PC-3 (cell line): ENCODE measurements at regions of chr6 and their contacts with region 1.

Region 1: GRCh38 chr6:116287689-116288282 is 8.1 kb upstream of the TSPYL1 start:
- DNase-seq: peak; percentile 64
- ATAC-seq: peak; percentile 65
- H3K4me3 ChIP-seq: no peak overlapping the region
- H3K27ac ChIP-seq: no peak overlapping the region
- H3K4me1 ChIP-seq: no peaks in the 10 kb centered on the region
- H3K27me3 ChIP-seq: no peaks in the 10 kb centered on the region
- CTCF ChIP-seq: peak; percentile 75

Region 2: GRCh38 chr6:116402108-116402937 is 114.5 kb after region 1 on chr6:
- CTCF ChIA-PET with region 1: no interaction called
- POLR2A ChIA-PET with region 1: no interaction called
- intact Hi-C with region 1: loop called (anchors 2 kb)
- DNase-seq: no peak
- ATAC-seq: no peak
- H3K4me3 ChIP-seq: no peak overlapping the region
- H3K27ac ChIP-seq: no peak overlapping the region
- H3K4me1 ChIP-seq: peaks cover 37% of the 10 kb centered on the region
- H3K27me3 ChIP-seq: no peaks in the 10 kb centered on the region
- CTCF ChIP-seq: no peak

Region 3: DNA sequence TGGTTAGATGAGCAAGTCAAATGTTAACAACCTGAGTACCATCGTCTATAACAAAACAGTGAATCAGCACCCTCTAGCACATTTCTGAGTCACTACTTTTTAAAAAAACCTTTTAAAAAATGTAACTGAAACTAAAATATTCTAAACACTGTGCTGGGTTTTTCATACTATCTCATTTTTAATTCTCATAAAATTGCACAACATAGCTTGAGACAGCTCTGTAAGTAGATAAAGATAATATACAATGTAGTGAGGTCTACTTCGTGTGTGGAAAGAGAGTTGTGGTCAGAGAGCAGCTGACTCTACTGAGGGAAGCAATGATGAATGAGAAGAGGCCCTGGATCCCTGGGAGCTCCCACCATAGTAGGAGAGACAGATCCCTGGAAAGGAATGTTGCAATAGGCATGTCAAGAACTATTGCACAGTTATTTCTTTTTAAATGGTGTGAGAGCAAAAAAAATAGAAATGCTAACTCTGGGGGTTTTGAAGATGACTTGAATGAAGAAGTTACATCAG is 159.8 kb after region 1 on chr6:
- CTCF ChIA-PET with region 1: interaction called, 3 read pairs
- POLR2A ChIA-PET with region 1: no interaction called
- intact Hi-C with region 1: loop called (anchors 5 kb)
- DNase-seq: peak; percentile 67
- ATAC-seq: peak; percentile 69
- H3K4me3 ChIP-seq: peak overlapping the region; percentile 51; the same call in 1 of the 2 replicates
- H3K27ac ChIP-seq: peak overlapping the region; percentile 80
- H3K4me1 ChIP-seq: peaks cover 27% of the 10 kb centered on the region
- H3K27me3 ChIP-seq: no peaks in the 10 kb centered on the region
- CTCF ChIP-seq: no peak

Region 4: DNA sequence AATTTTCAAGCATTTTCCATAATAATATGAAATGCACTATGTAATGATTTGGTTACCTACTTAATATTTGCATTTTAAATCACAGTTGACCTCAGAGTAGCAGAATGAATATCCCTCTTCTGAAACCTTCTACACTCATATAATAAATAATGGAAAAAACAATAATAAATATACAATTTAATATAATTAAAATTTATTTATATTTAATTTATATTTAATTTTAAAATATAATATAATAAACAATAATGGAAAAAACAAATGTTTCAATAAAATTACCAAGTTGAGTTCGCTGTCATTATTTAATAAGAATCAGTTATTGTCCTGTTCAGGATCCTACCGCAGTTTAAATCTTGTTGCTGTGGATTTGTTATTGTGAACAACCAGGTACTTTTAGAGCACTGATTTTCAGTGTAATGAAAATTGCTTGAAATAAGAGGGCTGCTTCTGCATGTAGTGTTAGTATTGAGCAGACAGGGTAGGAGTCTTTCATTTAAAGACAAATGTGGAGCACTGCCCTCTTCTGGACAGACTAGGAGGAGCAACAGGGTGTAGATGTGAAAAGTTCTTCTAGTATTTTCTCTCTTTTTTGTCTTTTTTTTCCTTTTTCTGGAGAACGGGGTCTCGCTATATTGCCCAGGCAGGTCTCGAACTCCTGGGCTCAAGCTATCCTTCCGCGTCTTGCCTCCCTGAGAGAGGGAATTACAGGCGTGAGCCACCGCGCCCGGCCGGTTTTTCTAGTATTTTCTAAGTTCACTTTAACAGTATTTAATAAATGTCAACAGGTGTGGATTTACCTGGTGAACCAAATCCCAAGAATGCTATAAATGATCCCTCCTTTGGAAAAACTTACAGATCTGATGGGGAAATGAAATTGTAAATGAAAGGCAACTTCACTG is 244.1 kb after region 1 on chr6:
- CTCF ChIA-PET with region 1: interaction called, 5 read pairs
- POLR2A ChIA-PET with region 1: no interaction called
- intact Hi-C with region 1: loop called (anchors 1 kb)
- DNase-seq: peak; percentile 67
- ATAC-seq: peak; percentile 54
- H3K4me3 ChIP-seq: no peak overlapping the region
- H3K27ac ChIP-seq: no peak overlapping the region
- H3K4me1 ChIP-seq: peaks cover 24% of the 10 kb centered on the region
- H3K27me3 ChIP-seq: no peaks in the 10 kb centered on the region
- CTCF ChIP-seq: peak; percentile 66

Region 5: GRCh38 chr6:116561377-116562018 is 273.7 kb after region 1 on chr6:
- CTCF ChIA-PET with region 1: no interaction called
- POLR2A ChIA-PET with region 1: no interaction called
- intact Hi-C with region 1: loop called (anchors 1 kb)
- DNase-seq: peak; percentile 77
- ATAC-seq: peak; percentile 64
- H3K4me3 ChIP-seq: no peak overlapping the region
- H3K27ac ChIP-seq: no peak overlapping the region
- H3K4me1 ChIP-seq: peaks cover 17% of the 10 kb centered on the region
- H3K27me3 ChIP-seq: no peaks in the 10 kb centered on the region
- CTCF ChIP-seq: peak; percentile 84